WTC11 (cell line): ENCODE measurements at regions of chr17 and their contacts with region 1.

Region 1: GRCh38 chr17:80899402-80900268 is 92.0 kb upstream of the CHMP6 start:
- DNase-seq: peak; percentile 85
- ATAC-seq: peak; percentile 88
- H3K4me3 Mint-ChIP-seq: no peak overlapping the region
- H3K27ac Mint-ChIP-seq: no peak overlapping the region
- H3K4me1 Mint-ChIP-seq: no peaks in the 10 kb centered on the region
- H3K27me3 Mint-ChIP-seq: no peaks in the 10 kb centered on the region
- CTCF ChIP-seq: peak; percentile 86; the same call in 1 of the 2 replicates

Region 2: DNA sequence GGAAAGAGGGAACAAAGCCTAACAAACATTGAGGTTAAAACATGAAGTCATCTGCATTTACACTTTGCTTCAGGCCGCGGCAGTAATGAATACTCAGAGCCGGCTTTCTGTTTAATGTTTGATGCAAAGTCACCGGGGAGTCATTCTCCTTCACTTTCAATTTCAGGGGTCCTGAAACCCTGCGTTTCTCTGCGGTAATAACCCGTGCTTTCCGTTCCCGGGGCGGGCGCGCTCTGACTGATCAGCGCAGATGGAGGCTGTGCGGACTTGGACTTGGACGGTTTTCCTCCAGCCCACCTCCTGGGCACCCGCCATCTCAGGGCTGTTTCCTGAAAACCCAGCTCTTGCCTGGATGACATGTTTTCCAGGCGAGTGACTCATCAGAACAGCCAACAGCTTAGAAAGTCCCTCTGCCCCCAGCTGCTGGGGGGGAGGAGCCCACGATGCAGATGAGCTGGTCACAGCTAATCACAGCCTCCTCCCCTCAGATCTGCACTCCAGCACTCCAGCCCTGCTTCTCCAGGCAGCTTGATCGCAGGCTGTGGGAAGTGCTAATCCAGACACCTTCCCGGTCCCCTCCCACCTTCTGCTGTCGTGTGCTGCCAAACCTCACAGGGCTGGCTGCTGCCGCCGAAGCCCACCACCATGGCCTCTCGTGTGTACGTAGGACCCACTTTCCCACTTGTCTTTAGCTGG is 66.6 kb before region 1 on chr17:
- CTCF ChIA-PET with region 1: interaction called, 18 read pairs
- POLR2A ChIA-PET with region 1: no interaction called
- DNase-seq: peak; percentile 82
- ATAC-seq: peak; percentile 96
- H3K4me3 Mint-ChIP-seq: peak overlapping the region; percentile 64
- H3K27ac Mint-ChIP-seq: peak overlapping the region; percentile 95
- H3K4me1 Mint-ChIP-seq: peaks cover 35% of the 10 kb centered on the region
- H3K27me3 Mint-ChIP-seq: no peaks in the 10 kb centered on the region
- CTCF ChIP-seq: no peak

Region 3: GRCh38 chr17:80866147-80866793 is 33.4 kb before region 1 on chr17:
- CTCF ChIA-PET with region 1: interaction called, 28 read pairs
- POLR2A ChIA-PET with region 1: no interaction called
- DNase-seq: peak; percentile 77
- ATAC-seq: peak; percentile 89
- H3K4me3 Mint-ChIP-seq: no peak overlapping the region
- H3K27ac Mint-ChIP-seq: peak overlapping the region; percentile 17; the same call in 1 of the 2 replicates
- H3K4me1 Mint-ChIP-seq: peaks cover 12% of the 10 kb centered on the region
- H3K27me3 Mint-ChIP-seq: no peaks in the 10 kb centered on the region
- CTCF ChIP-seq: peak; percentile 46; the same call in 1 of the 2 replicates

Region 4: GRCh38 chr17:80879723-80880647 is 19.6 kb before region 1 on chr17:
- CTCF ChIA-PET with region 1: interaction called, 16 read pairs
- POLR2A ChIA-PET with region 1: no interaction called
- DNase-seq: no peak
- ATAC-seq: no peak; the same call in 1 of the 2 replicates
- H3K4me3 Mint-ChIP-seq: no peak overlapping the region
- H3K27ac Mint-ChIP-seq: peak overlapping the region; percentile 94
- H3K4me1 Mint-ChIP-seq: peaks cover 9% of the 10 kb centered on the region
- H3K27me3 Mint-ChIP-seq: no peaks in the 10 kb centered on the region
- CTCF ChIP-seq: no peak

Region 5: DNA sequence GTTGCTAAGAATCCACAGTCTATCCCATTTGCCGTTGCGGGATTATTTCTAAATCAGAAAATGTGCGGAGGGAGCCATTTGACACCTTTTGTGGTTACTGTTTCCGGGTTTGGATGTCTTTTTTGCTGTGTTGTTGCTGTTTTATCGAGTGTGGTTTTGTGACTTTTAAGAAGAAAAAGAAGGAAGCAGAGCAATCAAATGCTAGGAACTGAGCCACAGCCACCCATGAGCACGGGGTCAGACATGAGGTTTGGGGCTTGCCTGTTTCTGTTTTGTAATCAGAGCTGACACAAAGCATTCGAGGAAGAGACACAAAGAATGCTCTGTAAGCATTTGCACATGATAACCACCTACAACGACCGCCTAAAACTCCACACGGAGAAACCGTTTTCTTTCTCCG is 38.9 kb after region 1 on chr17:
- CTCF ChIA-PET with region 1: interaction called, 15 read pairs
- POLR2A ChIA-PET with region 1: no interaction called
- DNase-seq: no peak
- ATAC-seq: no peak
- H3K4me3 Mint-ChIP-seq: no peak overlapping the region
- H3K27ac Mint-ChIP-seq: peak overlapping the region; percentile 43
- H3K4me1 Mint-ChIP-seq: no peaks in the 10 kb centered on the region
- H3K27me3 Mint-ChIP-seq: no peaks in the 10 kb centered on the region
- CTCF ChIP-seq: no peak

Region 6: GRCh38 chr17:81322271-81323082 is 422.8 kb after region 1 on chr17:
- CTCF ChIA-PET with region 1: no interaction called
- POLR2A ChIA-PET with region 1: no interaction called
- DNase-seq: peak; percentile 56
- ATAC-seq: peak; percentile 65
- H3K4me3 Mint-ChIP-seq: no peak overlapping the region
- H3K27ac Mint-ChIP-seq: no peak overlapping the region
- H3K4me1 Mint-ChIP-seq: peaks cover 10% of the 10 kb centered on the region
- H3K27me3 Mint-ChIP-seq: no peaks in the 10 kb centered on the region
- CTCF ChIP-seq: no peak